Breast epithelium (tissue), 4 donors: ENCODE measurements at regions of chr5 and their contacts with region 1.

Region 1: DNA sequence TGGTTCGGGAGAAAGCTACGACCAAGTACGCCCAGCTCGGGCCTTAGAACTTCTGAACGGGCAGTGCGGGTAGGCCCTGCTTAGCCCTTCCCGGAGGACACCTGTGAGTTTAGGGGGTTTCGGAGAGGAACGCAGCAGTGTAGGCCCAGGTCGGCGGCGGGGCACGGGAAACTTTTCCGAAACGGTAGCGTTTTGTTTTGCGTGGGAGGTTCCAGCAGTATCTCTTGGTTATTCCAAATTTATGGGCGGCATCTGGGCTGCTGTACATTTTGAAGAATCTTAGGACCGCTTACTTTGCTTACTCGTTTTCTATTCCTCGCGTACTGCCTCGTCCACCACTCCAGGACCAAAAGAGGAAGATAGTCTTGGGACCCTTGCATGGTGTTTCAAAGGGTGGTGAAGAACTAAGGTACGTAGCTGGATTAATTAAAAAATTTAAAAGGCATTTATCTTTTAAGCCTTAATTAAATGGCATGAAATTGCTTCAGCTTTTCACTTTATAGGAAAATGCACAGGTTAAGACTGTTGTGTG is 492 bp downstream of the TENT2 start:
- DNase-seq: no peak
- H3K4me3 ChIP-seq: peak overlapping the region; percentile 80 to 97 (median 90)
- H3K27ac ChIP-seq: peak overlapping the region; percentile 93 to 95
- H3K4me1 ChIP-seq: no peaks in the 10 kb centered on the region
- H3K27me3 ChIP-seq: no peaks in the 10 kb centered on the region
- CTCF ChIP-seq: no peak
- POLR2A ChIP-seq: no peak

Region 2: GRCh38 chr5:79263290-79263689 is 349.4 kb before region 1 on chr5:
- intact Hi-C with region 1: no loop called
- DNase-seq: no peak
- H3K4me3 ChIP-seq: no peak overlapping the region
- H3K27ac ChIP-seq: no peak overlapping the region
- H3K4me1 ChIP-seq: no peaks in the 10 kb centered on the region
- H3K27me3 ChIP-seq: no peaks in the 10 kb centered on the region
- CTCF ChIP-seq: no peak
- POLR2A ChIP-seq: no peak

Region 3: GRCh38 chr5:79552984-79553383 is 59.7 kb before region 1 on chr5:
- intact Hi-C with region 1: no loop called
- DNase-seq: no peak
- H3K4me3 ChIP-seq: no peak overlapping the region
- H3K27ac ChIP-seq: no peak overlapping the region
- H3K4me1 ChIP-seq: no peaks in the 10 kb centered on the region
- H3K27me3 ChIP-seq: no peaks in the 10 kb centered on the region
- CTCF ChIP-seq: no peak
- POLR2A ChIP-seq: no peak

Region 4: DNA sequence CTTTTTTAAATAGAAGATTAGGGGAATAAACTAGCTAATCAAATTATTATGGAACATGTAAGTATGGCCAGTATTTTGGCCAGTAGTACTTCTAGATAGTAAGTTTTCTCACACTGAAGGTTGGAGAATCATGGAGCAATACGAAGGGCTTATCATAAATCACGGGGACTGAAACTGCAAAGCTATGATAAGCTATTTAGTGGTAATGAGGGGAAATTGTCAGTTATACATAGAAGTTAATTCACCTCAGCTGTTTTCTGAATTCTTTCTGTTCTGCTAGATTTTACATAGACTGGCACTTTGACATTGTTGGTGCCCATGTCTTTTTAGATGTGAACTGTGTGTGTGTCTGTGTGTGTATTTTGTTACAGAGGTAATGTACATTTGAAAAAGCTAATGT is 840.6 kb after region 1 on chr5:
- intact Hi-C with region 1: loop called (anchors 5 kb)
- DNase-seq: no peak
- H3K4me3 ChIP-seq: no peak overlapping the region
- H3K27ac ChIP-seq: no peak overlapping the region
- H3K4me1 ChIP-seq: no peaks in the 10 kb centered on the region
- H3K27me3 ChIP-seq: no peaks in the 10 kb centered on the region
- CTCF ChIP-seq: no peak
- POLR2A ChIP-seq: no peak